Activated CD4-positive, alpha-beta T cell treated with anti-CD3 and anti-CD28 coated beads, Interleukin-2, amount 10 ng/mL, durations not matched to agents 24 days and 14 days (primary cell): ENCODE measurements at regions of chr1 and their contacts with region 1.

Region 1: GRCh38 chr1:66331657-66332547 is 202.1 kb upstream of the SGIP1 start:
- DNase-seq: peak; percentile 82
- H3K4me3 Mint-ChIP-seq: peak overlapping the region; percentile 98
- H3K27ac Mint-ChIP-seq: peak overlapping the region; percentile 97
- H3K4me1 Mint-ChIP-seq: peaks cover 56% of the 10 kb centered on the region
- H3K27me3 Mint-ChIP-seq: no peaks in the 10 kb centered on the region

Region 2: GRCh38 chr1:66258404-66259105 is 73.3 kb before region 1 on chr1:
- intact Hi-C with region 1: loop called (anchors 1 kb)
- DNase-seq: no peak
- H3K4me3 Mint-ChIP-seq: no peak overlapping the region
- H3K27ac Mint-ChIP-seq: peak overlapping the region; percentile 59
- H3K4me1 Mint-ChIP-seq: peaks cover 57% of the 10 kb centered on the region
- H3K27me3 Mint-ChIP-seq: no peaks in the 10 kb centered on the region

Region 3: GRCh38 chr1:66291047-66291868 is 40.6 kb before region 1 on chr1:
- intact Hi-C with region 1: no loop called
- DNase-seq: no peak
- H3K4me3 Mint-ChIP-seq: no peak overlapping the region
- H3K27ac Mint-ChIP-seq: no peak overlapping the region
- H3K4me1 Mint-ChIP-seq: peaks cover 39% of the 10 kb centered on the region
- H3K27me3 Mint-ChIP-seq: no peaks in the 10 kb centered on the region

Region 4: DNA sequence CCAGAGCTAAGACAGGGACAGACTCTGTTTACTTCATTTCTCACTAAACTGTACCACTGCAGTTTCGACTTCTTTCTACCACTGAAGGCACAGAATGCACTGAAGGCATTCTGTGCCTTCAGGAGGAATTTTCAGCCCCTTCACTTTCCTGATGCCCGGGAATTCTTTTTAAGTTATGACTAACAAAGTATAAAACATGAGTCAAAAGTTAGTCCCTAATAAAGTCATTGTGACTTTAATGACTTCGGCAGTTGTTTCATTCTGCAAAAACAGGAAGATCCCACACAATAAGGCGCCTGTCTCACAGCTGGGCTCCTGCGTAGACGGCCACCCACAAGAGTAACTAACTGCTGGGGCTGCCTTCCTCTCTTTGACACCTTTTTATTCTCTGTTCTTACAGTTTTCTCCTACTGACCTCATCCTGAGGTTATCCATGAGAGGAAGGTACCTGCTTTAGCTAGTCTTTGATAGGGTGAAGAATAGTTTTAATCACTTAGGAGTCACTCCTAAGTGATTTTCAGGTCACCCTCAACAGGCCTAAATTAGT is 18.2 kb after region 1 on chr1:
- intact Hi-C with region 1: loop called (anchors 1 kb)
- DNase-seq: peak; percentile 82
- H3K4me3 Mint-ChIP-seq: peak overlapping the region; percentile 80
- H3K27ac Mint-ChIP-seq: peak overlapping the region; percentile 90
- H3K4me1 Mint-ChIP-seq: peaks cover 72% of the 10 kb centered on the region
- H3K27me3 Mint-ChIP-seq: no peaks in the 10 kb centered on the region

Region 5: DNA sequence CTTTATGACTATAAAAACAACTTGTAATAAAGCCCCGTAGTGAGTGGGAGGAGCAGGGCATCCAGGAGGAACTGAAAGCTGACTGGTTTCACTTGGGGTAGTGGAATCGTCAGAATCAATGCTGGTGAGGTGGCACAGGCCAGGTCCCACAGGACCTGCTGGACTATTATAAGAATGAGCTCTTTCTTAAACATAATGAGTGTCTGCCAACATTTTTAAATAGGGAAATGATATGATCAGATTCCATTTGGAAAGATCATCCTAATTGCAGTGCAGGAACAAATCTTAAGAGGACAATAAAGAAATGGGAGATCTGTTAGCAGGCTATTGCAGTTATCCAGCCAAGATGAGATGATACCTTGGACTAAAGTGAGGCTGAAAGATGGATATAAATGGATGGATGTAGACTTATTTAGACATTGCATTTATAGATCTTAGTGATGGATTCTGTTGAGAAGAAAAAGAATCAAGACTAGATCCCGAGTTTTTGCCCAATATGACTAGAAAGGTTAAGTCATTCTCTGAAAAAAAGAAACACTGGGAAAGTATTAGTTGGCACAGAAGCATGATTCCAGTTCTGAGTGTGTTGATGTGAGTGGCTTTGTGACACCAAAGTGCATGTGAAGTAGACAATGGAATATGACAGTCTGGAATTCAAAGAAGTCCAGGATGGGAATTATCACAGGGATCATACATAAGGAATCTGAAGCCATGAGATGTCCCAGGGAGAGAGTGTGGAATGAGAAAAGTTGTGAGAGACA is 48.7 kb after region 1 on chr1:
- intact Hi-C with region 1: no loop called
- DNase-seq: peak; percentile 60
- H3K4me3 Mint-ChIP-seq: no peak overlapping the region
- H3K27ac Mint-ChIP-seq: peak overlapping the region; percentile 54
- H3K4me1 Mint-ChIP-seq: peaks cover 28% of the 10 kb centered on the region
- H3K27me3 Mint-ChIP-seq: no peaks in the 10 kb centered on the region

Region 6: DNA sequence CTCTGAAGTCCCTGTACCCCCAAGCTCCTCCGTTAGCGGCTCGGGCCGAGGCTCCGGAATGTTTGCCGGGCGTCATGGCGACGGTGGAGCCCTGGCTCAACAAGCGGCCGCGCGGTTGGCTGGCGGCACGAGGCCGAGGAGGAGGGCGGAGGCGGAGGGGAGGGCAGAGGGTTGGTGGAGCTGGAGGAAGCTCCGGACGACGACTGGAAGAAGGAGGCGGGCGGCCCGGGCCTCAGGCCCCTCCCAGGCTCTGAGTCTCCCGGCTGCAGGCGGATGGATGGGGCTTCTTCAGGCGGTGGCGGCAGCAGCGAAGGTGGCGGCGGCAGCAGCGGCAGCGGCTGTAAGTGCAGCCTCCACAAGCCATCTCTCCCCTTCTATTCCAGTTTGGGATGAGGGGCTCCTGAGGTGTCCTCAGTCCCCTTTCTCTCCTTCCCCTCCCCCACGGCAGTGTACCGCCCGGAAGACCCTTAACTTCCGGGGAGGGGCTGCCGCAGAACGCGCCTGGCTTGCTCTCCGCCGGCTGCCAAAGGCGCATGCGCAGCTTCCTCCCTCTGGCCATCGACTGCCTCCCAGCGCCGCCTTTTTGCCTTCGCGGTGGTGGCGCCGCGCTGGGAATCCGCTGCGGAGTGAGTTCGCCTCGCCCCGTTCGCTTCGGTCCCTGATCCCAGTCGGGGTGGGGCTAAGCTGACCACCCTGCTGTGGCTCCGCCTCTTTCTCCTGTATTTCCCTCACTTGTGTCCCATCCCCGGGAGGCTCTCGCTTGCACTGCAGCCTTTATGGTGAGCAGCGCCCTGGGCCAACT is 593.1 kb after region 1 on chr1 and contains the starts of genes DNAI4 and MIER1:
- intact Hi-C with region 1: loop called (anchors 10 kb)
- DNase-seq: peak; percentile 99
- H3K4me3 Mint-ChIP-seq: peak within 1 kb of the TSS; percentile 99
- H3K27ac Mint-ChIP-seq: peak within 1 kb of the TSS; percentile 97
- H3K4me1 Mint-ChIP-seq: peaks cover 41% of the 10 kb centered on the region
- H3K27me3 Mint-ChIP-seq: no peaks in the 10 kb centered on the region
- total RNA-seq, gene DNAI4: 0.26 and 2.7 TPM in 2 replicates
- total RNA-seq, gene MIER1: 51.8 and 54.9 TPM in 2 replicates